ENCODE measurements at regions of chr4 and their contacts with region 1.

Region 1: GRCh38 chr4:11165052-11165451 is 263.6 kb downstream of the HS3ST1 start:
- DNase-seq: peak; percentile 19
- ATAC-seq: peak; percentile 63
- H3K4me3 ChIP-seq: no peak overlapping the region
- H3K27ac ChIP-seq: no peak overlapping the region
- H3K4me1 ChIP-seq: no peaks in the 10 kb centered on the region
- H3K27me3 ChIP-seq: no peaks in the 10 kb centered on the region
- CTCF ChIP-seq: no peak
- POLR2A ChIP-seq: no peak
- RAD21 ChIP-seq: no peak

Region 2: GRCh38 chr4:11179796-11180195 is 14.7 kb after region 1 on chr4:
- CTCF ChIA-PET with region 1: no interaction called
- POLR2A ChIA-PET with region 1: interaction called, 3 read pairs
- RAD21 ChIA-PET with region 1: no interaction called
- intact Hi-C with region 1: loop called (anchors 1 kb)
- DNase-seq: no peak
- ATAC-seq: no peak
- H3K4me3 ChIP-seq: no peak overlapping the region
- H3K27ac ChIP-seq: no peak overlapping the region
- H3K4me1 ChIP-seq: no peaks in the 10 kb centered on the region
- H3K27me3 ChIP-seq: no peaks in the 10 kb centered on the region
- CTCF ChIP-seq: no peak
- POLR2A ChIP-seq: no peak
- RAD21 ChIP-seq: no peak

Measured in HCT116 (cell line).